ENCODE measurements at regions of chr16 and their contacts with region 1.

Region 1: DNA sequence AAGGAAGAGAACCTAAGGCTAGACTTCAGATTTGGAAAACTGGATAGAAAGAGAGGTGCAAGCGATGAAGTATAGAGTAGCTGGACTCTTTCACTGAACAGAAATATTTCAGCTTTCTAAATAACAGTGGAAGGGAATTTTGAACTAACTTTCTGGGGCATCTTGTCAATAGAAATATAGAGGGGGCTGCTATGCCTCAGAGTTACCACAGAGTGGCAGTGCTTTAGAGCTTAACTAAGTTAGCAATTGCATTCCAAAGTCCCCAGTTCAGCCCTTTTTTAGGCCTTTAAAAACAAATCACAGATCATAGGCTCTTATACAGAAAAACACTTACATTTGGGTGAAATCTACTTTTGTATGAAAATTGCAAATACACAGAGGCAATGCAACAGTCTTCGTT is 154.2 kb upstream of the CDH8 start:
- DNase-seq: no peak
- ATAC-seq: no peak
- H3K4me3 ChIP-seq: no peak overlapping the region
- H3K27ac ChIP-seq: no peak overlapping the region
- H3K4me1 ChIP-seq: no peaks in the 10 kb centered on the region
- H3K27me3 ChIP-seq: no peaks in the 10 kb centered on the region
- CTCF ChIP-seq: peak in 8 of 12 donors; percentile 16 to 41 (median 28)
- POLR2A ChIP-seq: no peak

Region 2: DNA sequence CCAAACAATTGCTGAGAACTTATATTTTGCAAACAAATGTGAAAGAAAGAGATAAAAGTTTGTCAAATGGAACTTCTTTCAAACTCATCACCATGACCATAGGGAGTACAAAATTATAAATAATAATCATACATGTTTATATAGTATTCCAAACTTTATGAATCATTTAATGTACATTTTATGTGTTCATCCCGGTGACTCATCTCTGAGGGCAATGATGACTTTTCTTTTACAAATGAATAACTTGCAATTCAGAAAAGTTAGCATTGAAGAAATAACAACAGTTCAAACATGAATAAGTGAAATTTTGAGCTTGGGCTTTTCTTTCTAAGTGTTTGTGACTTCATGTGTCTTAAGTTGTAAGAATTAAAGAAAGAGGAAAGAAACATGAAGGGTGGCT is 87.8 kb before region 1 on chr16:
- intact Hi-C with region 1: no loop called
- DNase-seq: no peak
- ATAC-seq: no peak
- H3K4me3 ChIP-seq: no peak overlapping the region
- H3K27ac ChIP-seq: no peak overlapping the region
- H3K4me1 ChIP-seq: no peaks in the 10 kb centered on the region
- H3K27me3 ChIP-seq: no peaks in the 10 kb centered on the region
- CTCF ChIP-seq: no peak
- POLR2A ChIP-seq: no peak

Region 3: GRCh38 chr16:62240722-62241121 is 50.3 kb after region 1 on chr16:
- intact Hi-C with region 1: no loop called
- DNase-seq: no peak
- ATAC-seq: no peak
- H3K4me3 ChIP-seq: no peak overlapping the region
- H3K27ac ChIP-seq: no peak overlapping the region
- H3K4me1 ChIP-seq: no peaks in the 10 kb centered on the region
- H3K27me3 ChIP-seq: no peaks in the 10 kb centered on the region
- CTCF ChIP-seq: no peak
- POLR2A ChIP-seq: no peak

Region 4: GRCh38 chr16:62256406-62256805 is 66.0 kb after region 1 on chr16:
- intact Hi-C with region 1: no loop called
- DNase-seq: no peak
- ATAC-seq: no peak
- H3K4me3 ChIP-seq: no peak overlapping the region
- H3K27ac ChIP-seq: no peak overlapping the region
- H3K4me1 ChIP-seq: no peaks in the 10 kb centered on the region
- H3K27me3 ChIP-seq: no peaks in the 10 kb centered on the region
- CTCF ChIP-seq: peak in 3 of 12 donors; percentile 6 to 13 (median 8)
- POLR2A ChIP-seq: no peak

Region 5: GRCh38 chr16:63289852-63290460 is 1099.5 kb after region 1 on chr16:
- intact Hi-C with region 1: loop called in 1 of 10 experiments (anchors 5 kb)
- DNase-seq: peak in 4 of 5 donors; percentile 8 to 48 (median 34)
- ATAC-seq: peak; percentile 66 to 88 (median 84)
- H3K4me3 ChIP-seq: no peak overlapping the region
- H3K27ac ChIP-seq: no peak overlapping the region
- H3K4me1 ChIP-seq: peaks cover 0 to 17% (median 0%) of the 10 kb centered on the region in 12 donors
- H3K27me3 ChIP-seq: no peaks in the 10 kb centered on the region
- CTCF ChIP-seq: peak; percentile 45 to 72 (median 66)
- POLR2A ChIP-seq: no peak

Measured in heart left ventricle (tissue), 16 donors.